ENCODE measurements at regions of chr6 and their contacts with region 1.

Region 1: DNA sequence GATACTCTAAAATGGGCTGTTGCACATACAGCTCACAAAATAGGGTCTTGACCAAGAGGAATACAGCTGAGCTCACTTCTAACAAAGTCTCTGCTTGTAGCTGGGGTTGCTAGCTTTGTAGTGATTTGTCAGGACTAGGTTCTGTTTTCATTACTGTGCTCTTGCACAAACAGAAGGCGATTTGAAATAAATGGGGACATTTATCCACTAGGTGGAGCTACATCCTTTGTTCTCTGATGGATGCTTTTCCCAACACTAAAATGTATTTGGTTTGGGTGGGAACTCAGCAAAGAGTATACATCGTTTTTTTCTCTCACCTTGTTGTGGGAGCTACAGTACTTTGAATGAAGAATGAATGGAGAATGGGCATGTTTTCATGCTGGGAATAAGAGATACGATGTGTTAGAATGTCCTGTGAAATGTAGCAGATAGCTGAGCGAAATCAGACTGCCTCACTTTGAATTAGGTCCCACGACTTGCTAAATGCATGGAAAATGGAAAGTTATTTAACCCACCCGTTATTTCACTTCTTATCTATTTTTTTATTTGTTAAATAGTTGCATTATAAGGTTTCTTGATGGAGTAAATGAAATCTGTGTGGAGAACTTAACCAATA is 494.7 kb upstream of the MAP3K7 start:
- DNase-seq: no peak
- ATAC-seq: peak; percentile 26
- H3K4me3 Mint-ChIP-seq: no peak overlapping the region
- H3K27ac Mint-ChIP-seq: no peak overlapping the region
- H3K4me1 Mint-ChIP-seq: no peaks in the 10 kb centered on the region
- H3K27me3 Mint-ChIP-seq: no peaks in the 10 kb centered on the region

Region 2: DNA sequence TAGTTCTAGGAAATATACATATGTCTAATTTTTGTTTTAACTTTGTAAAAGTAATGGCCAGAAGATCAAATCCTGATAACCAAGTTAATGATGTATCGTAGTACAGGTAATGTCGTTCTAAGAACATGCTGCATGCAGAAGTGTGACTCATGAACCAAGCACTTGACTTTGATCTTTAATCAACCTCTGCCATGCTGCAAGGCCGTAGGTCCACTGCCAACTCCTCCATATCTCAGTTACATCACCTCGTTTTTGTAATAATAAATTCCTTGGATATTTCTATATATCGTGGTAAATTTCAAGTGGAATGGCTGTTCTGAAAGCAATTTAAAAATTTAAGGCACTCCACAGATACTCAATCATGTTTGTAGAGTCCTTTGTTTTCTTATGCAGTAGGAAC is 1566.1 kb after region 1 on chr6:
- CTCF ChIA-PET with region 1: no interaction called
- POLR2A ChIA-PET with region 1: no interaction called
- intact Hi-C with region 1: loop called in 1 of 2 experiments (anchors 5 kb)
- DNase-seq: no peak
- ATAC-seq: no peak
- H3K4me3 Mint-ChIP-seq: no peak overlapping the region
- H3K27ac Mint-ChIP-seq: no peak overlapping the region
- H3K4me1 Mint-ChIP-seq: no peaks in the 10 kb centered on the region
- H3K27me3 Mint-ChIP-seq: no peaks in the 10 kb centered on the region